ENCODE measurements at regions of chr1 and their contacts with region 1.

Region 1: DNA sequence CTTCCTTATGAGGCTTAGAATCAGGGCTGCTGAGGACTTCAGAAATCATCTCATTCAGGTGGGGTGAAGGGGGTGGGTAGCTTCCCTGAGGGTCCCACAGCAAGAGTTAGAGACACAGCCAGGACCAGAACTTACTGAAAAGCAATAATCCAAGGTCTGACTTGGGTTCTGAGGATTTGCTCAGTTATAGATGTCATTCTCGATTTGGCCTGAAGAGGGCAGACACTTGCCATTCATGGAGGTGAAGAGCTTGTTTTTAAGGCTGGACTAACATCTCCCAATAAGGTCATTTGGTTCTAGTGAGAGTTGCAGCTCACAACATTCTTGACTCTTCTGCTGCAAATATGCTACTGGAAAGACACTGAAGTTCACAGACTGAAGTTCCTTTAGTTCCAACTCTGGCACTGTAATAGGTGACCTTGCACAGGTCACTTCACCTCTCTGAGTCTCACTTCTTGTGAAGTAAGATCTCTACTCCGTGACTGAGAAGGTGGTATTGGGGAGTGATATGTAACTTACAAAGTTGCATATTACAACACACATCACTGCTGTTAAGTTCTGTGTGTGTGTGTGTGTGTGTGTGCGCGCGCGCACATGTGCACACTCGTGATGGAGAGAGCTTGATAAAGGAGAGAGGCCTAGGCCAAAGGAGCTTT is 69.8 kb upstream of the DIRAS3 start:
- DNase-seq: peak; percentile 69
- ATAC-seq: peak; percentile 80
- H3K4me3 ChIP-seq: no peak overlapping the region
- H3K27ac ChIP-seq: no peak overlapping the region
- H3K4me1 ChIP-seq: peaks cover 0 to 22% of the 10 kb centered on the region in 2 experiments; a peak in 1 of 4 replicates
- H3K27me3 ChIP-seq: no peaks in the 10 kb centered on the region
- CTCF ChIP-seq: peak; percentile 64 to 83 (median 82); a peak in 5 of 6 replicates
- POLR2A ChIP-seq: no peak
- RAD21 ChIP-seq: peak; percentile 95

Region 2: GRCh38 chr1:68093737-68094136 is 26.5 kb before region 1 on chr1:
- CTCF ChIA-PET with region 1: no interaction called
- POLR2A ChIA-PET with region 1: no interaction called
- RAD21 ChIA-PET with region 1: no interaction called
- intact Hi-C with region 1: no loop called
- DNase-seq: no peak
- ATAC-seq: no peak
- H3K4me3 ChIP-seq: no peak overlapping the region
- H3K27ac ChIP-seq: no peak overlapping the region
- H3K4me1 ChIP-seq: peaks cover 3 to 7% of the 10 kb centered on the region in 2 experiments; a peak in 2 of 4 replicates
- H3K27me3 ChIP-seq: no peaks in the 10 kb centered on the region
- CTCF ChIP-seq: no peak
- POLR2A ChIP-seq: no peak
- RAD21 ChIP-seq: no peak

Region 3: DNA sequence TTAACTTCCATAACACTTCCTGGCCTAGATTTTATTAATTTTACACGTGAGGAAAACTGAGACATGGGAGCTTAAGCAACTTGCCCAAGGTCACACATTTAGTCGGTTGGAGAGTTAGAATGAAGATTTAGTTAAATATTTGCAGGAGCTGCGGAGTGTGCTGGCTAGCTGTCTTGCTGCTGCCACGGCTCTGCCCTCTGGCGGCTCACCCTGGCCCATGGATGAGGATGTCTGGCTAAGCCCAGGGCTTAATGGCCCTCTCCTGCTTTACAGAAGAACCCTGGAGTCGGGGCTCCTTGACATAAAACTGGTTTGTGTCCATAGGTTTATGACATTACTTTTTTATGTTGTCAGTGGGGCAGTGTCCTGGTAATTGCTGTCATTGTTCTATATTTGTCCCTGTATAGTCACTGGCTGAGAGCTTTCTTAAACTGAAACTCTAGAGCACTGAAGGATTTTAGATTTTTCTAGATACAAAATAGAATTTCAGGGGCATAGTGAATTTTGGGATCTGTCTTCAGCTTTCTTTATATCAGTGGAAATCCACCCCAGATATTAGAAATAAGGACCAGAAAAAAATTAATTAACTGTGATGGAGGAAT is 200.9 kb after region 1 on chr1:
- CTCF ChIA-PET with region 1: interaction called, 60 read pairs
- POLR2A ChIA-PET with region 1: interaction called, 5 read pairs
- RAD21 ChIA-PET with region 1: interaction called, 8 to 12 read pairs
- intact Hi-C with region 1: loop called (anchors 1 kb)
- DNase-seq: no peak
- ATAC-seq: peak; percentile 69
- H3K4me3 ChIP-seq: no peak overlapping the region
- H3K27ac ChIP-seq: no peak overlapping the region
- H3K4me1 ChIP-seq: peaks cover 40 to 43% of the 10 kb centered on the region in 2 experiments
- H3K27me3 ChIP-seq: no peaks in the 10 kb centered on the region
- CTCF ChIP-seq: peak; percentile 72 to 91 (median 78)
- POLR2A ChIP-seq: no peak
- RAD21 ChIP-seq: peak; percentile 85

Region 4: DNA sequence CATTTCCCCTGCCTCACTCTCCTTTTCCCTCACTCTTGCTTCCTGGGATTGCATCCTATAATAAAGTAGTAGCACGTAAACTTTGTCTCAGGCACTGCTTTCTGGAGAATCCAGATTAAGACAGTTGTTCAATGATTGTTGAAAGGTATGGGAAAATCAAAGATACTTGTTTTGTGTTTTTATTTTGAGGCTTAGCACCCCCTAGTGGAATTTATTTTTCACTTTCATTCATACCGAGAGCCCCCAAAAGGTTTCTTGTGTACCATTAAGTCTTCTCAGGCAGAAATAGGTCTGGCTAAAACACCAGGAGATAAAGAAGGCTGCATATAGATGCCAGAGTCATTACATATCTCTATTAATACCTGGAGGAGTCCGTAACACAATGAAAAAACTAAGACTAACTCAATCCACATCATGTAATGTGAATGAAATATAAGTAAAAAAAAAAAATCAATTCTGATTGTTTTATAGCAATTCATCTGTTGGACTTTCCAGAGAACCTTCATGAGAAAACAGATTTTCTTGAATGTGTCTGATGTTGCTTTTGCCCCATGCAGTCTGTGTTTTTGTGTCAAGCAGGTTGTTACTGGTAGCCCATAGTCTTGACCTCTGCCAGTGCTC is 226.0 kb after region 1 on chr1:
- CTCF ChIA-PET with region 1: interaction called, 144 read pairs
- POLR2A ChIA-PET with region 1: interaction called, 4 read pairs
- RAD21 ChIA-PET with region 1: interaction called, 12 to 20 read pairs
- intact Hi-C with region 1: loop called (anchors 1 kb)
- DNase-seq: peak; percentile 45
- ATAC-seq: peak; percentile 42
- H3K4me3 ChIP-seq: no peak overlapping the region
- H3K27ac ChIP-seq: no peak overlapping the region
- H3K4me1 ChIP-seq: peaks cover 0 to 31% of the 10 kb centered on the region in 2 experiments; a peak in 3 of 4 replicates
- H3K27me3 ChIP-seq: no peaks in the 10 kb centered on the region
- CTCF ChIP-seq: peak; percentile 46 to 75 (median 57); a peak in 5 of 6 replicates
- POLR2A ChIP-seq: no peak
- RAD21 ChIP-seq: peak; percentile 57

Region 5: DNA sequence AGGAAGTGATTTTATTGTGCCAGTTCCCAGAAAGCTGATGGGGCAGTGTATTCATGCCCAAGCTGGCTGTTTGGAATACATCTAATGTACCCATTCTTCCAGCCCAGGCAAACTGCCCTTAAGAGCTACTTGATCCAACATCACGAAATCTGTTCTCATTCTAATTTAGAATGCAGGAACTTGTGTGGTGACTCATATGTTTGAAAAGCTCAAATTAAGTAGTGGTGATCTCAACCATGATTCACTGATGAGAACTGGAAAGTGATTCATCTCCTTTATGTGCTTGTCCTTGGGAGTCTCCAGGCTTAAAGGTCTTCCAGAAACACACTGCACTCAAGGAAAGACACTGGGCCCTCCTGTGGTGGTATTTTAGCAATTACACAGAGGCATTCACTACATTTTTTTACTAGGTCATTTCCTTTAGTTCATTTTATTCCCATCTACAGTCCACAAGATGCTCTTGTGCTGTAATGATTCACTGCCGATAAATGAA is 264.1 kb after region 1 on chr1:
- CTCF ChIA-PET with region 1: interaction called, 17 read pairs
- POLR2A ChIA-PET with region 1: interaction called, 5 read pairs
- RAD21 ChIA-PET with region 1: no interaction called
- intact Hi-C with region 1: loop called (anchors 1 kb)
- DNase-seq: peak; percentile 99
- ATAC-seq: peak; percentile 80
- H3K4me3 ChIP-seq: peak overlapping the region; percentile 12 to 69
- H3K27ac ChIP-seq: peak overlapping the region; percentile 91
- H3K4me1 ChIP-seq: peaks cover 46 to 66% of the 10 kb centered on the region in 2 experiments
- H3K27me3 ChIP-seq: no peaks in the 10 kb centered on the region
- CTCF ChIP-seq: peak; percentile 35 to 48 (median 47); a peak in 5 of 6 replicates
- POLR2A ChIP-seq: no peak
- RAD21 ChIP-seq: peak; percentile 61

Region 6: GRCh38 chr1:69737527-69738185 is 1617.4 kb after region 1 on chr1:
- CTCF ChIA-PET with region 1: no interaction called
- POLR2A ChIA-PET with region 1: no interaction called
- RAD21 ChIA-PET with region 1: no interaction called
- intact Hi-C with region 1: loop called (anchors 2 kb)
- DNase-seq: peak; percentile 61
- ATAC-seq: peak; percentile 81
- H3K4me3 ChIP-seq: no peak overlapping the region
- H3K27ac ChIP-seq: no peak overlapping the region
- H3K4me1 ChIP-seq: no peaks in the 10 kb centered on the region
- H3K27me3 ChIP-seq: peaks cover 30% of the 10 kb centered on the region
- CTCF ChIP-seq: peak; percentile 46 to 78 (median 65); a peak in 5 of 6 replicates
- POLR2A ChIP-seq: no peak
- RAD21 ChIP-seq: peak; percentile 79